Posterior vena cava (tissue), 2 donors: ENCODE measurements at regions of chr1 and their contacts with region 1.

Region 1: GRCh38 chr1:170305777-170306512 is 160.2 kb downstream of the NTMT2 start:
- DNase-seq: no peak

Region 2: DNA sequence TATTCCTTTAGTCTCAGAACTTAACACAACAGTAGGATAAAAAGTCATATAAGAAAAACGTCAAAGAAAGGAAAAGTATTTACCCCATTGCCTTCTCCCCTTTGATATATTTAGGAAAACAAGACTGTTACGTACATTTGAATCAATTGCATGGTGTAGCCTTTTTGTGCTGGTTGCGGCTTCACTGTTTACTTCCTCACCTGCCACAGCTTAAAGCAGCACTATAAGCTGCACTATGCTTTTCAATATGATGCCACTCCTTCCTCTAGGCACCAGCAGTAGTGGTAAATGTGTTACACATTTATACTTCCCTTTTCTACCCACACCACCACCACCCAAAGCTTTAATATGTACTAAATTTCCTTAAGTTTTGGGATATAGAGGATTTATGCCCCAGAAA is 1088.3 kb before region 1 on chr1:
- intact Hi-C with region 1: no loop called
- DNase-seq: no peak

Region 3: DNA sequence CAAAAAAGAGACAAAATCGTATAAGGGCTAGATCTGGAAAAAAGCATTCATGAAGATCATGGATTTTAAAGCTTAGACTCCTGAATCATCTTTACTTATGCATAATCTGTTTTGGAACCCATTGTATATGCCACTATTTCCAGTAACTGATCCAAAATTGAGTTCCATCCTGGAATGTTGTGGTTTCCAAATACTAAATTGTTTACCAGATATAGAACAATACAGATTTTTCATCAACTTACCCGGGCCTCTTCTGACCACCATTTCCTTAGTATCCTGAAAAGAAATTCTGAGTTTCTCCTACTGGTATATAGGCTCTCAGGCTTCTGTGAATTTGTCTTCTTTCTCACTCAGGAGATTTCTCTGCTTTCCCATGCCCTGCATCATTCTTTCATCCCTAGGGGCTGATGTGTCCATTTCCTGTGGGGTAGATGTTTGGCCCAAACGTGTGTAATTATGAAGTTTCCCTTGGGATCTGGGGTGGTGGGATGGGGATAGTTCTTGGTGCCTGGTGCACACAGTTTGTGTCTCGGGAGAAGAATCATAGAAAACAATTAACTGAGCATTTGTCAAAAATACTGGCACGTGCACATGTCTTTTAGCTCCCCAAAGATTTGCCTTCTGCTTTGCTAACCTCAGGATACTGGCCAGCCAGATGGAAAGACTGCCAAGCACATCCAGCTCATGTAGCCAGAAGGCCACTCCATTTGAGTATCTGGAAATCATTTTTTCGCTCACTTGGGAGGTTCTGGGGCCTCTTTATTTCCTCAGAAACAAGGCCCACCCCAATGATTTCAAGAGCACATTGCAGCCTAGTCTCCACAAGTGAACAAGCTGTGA is 32.4 kb before region 1 on chr1:
- intact Hi-C with region 1: loop called in 1 of 2 experiments (anchors 1 kb)
- DNase-seq: peak; percentile 79